ENCODE measurements at regions of chr19 and their contacts with region 1.

Region 1: GRCh38 chr19:572140-572742 is at the start of gene BSG:
- DNase-seq: peak; percentile 96 to 99 (median 99)
- ATAC-seq: peak; percentile 89
- H3K4me3 ChIP-seq: peak within 1 kb of the TSS; percentile 75
- H3K4me3 Mint-ChIP-seq: peak within 1 kb of the TSS; percentile 87 to 99 (median 96)
- H3K27ac ChIP-seq: peak within 1 kb of the TSS; percentile 93
- H3K27ac Mint-ChIP-seq: peak within 1 kb of the TSS; percentile 92 to 99 (median 96)
- H3K4me1 ChIP-seq: peaks cover 16 to 19% of the 10 kb centered on the region in 2 donors
- H3K4me1 Mint-ChIP-seq: peaks cover 12 to 49% (median 36%) of the 10 kb centered on the region in 7 donors
- H3K27me3 ChIP-seq: no peaks in the 10 kb centered on the region
- H3K27me3 Mint-ChIP-seq: peaks cover 0 to 4% (median 0%) of the 10 kb centered on the region in 5 donors
- total RNA-seq, gene BSG: 109 to 247 (median 120) TPM

Region 2: DNA sequence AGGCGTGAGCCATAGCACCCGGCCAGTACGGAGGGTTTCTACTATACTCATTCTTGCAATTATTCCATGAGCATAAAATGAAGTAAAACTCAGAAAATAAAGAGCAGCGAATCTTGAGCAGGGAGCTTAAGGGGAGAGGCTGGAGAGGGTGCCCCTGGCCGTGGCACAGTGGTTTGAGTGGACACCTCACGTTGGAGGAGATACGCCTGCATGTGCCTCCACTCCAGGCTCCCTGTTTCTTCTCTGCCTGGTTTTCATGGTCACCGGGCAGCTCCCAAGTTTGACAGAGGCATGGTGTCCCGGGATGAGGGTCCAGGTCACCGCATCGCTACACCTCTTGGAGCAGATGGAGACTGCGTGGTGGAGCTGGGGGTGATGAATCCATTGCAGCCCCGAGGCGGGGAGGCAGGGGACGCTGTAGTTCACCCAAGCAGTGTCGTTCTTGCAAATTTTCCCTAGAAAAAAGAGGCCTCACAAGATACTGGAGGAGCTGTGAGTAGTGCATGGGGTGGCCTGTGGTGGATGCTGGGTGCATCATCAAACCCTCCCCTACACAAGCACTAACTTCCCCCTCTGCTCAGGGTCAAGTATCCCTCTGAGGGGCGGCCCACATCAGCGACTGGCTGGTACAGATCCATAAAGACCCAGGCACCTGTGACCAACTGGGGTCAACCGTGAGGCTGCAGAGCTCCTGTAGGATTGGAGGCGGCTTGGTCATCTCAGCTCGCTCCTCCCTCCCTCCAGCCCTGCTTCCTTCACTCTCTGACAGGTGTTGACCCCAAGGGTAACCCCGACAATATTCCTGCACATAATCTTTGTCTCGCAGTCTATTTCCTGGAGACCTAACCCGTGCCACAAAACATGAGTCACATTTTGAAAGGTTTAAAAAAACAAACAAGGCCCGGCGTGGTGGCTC is 224.0 kb before region 1 on chr19:
- CTCF ChIA-PET with region 1: no interaction called
- POLR2A ChIA-PET with region 1: no interaction called
- intact Hi-C with region 1: no loop called
- DNase-seq: no peak
- ATAC-seq: no peak
- H3K4me3 ChIP-seq: no peak overlapping the region
- H3K4me3 Mint-ChIP-seq: no peak overlapping the region
- H3K27ac ChIP-seq: no peak overlapping the region
- H3K27ac Mint-ChIP-seq: no peak overlapping the region
- H3K4me1 ChIP-seq: peaks cover 5 to 17% of the 10 kb centered on the region in 2 donors
- H3K4me1 Mint-ChIP-seq: peaks cover 12 to 19% (median 16%) of the 10 kb centered on the region in 7 donors
- H3K27me3 ChIP-seq: no peaks in the 10 kb centered on the region
- H3K27me3 Mint-ChIP-seq: peaks cover 0 to 7% (median 5%) of the 10 kb centered on the region in 5 donors

Region 3: GRCh38 chr19:531009-531752 is 41.1 kb before region 1 on chr19:
- CTCF ChIA-PET with region 1: no interaction called
- POLR2A ChIA-PET with region 1: interaction called, 7 read pairs
- intact Hi-C with region 1: loop called (anchors 1 kb)
- DNase-seq: peak; percentile 79 to 100 (median 94)
- ATAC-seq: peak; percentile 87
- H3K4me3 ChIP-seq: peak overlapping the region; percentile 72
- H3K4me3 Mint-ChIP-seq: peak overlapping the region; percentile 64 to 93 (median 82)
- H3K27ac ChIP-seq: peak overlapping the region; percentile 90
- H3K27ac Mint-ChIP-seq: peak overlapping the region in 8 of 9 donors; percentile 19 to 87 (median 80)
- H3K4me1 ChIP-seq: peaks cover 8 to 9% of the 10 kb centered on the region in 2 donors
- H3K4me1 Mint-ChIP-seq: peaks cover 8 to 32% (median 16%) of the 10 kb centered on the region in 7 donors
- H3K27me3 ChIP-seq: no peaks in the 10 kb centered on the region
- H3K27me3 Mint-ChIP-seq: peaks cover 0 to 4% (median 0%) of the 10 kb centered on the region in 5 donors

Region 4: DNA sequence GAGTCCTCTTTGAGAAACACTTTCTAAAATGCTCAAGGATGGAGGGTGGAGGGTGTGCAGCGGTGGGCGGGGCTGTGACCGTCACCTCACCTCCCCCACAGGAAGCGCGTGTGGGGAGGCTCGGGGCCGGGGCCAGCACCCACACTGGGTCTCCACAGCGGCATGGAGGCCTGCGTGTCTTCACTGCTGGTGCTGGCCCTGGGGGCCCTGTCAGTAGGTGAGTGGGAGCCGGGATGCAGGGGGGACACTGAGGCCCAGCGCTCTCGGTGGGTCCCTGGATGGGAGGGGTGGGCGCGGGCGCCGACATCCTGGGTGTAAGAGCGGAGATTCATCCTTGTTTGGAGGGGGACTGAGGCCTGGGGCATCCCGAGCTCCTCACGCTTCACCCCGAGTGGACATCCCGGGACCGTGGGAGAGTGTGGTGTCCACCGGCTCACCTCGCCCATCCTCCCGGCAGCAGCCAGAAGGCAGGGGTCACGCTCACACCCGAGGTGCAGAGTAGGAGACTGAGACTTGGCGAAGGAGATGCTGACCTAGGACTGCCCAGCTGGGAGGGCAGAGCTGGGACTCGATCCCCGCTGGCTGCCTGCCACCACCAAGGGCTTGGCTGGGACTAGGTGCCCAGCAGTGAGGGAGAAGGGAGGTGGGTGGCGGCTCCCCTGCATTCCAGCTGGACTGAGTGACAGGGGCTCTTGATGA is 28.2 kb before region 1 on chr19 and contains the start of gene GZMM:
- CTCF ChIA-PET with region 1: no interaction called
- POLR2A ChIA-PET with region 1: interaction called, 5 read pairs
- intact Hi-C with region 1: loop called in 1 of 2 experiments (anchors 1 kb)
- DNase-seq: peak; percentile 63 to 86 (median 82)
- ATAC-seq: peak; percentile 98
- H3K4me3 ChIP-seq: peak within 1 kb of the TSS; percentile 70
- H3K4me3 Mint-ChIP-seq: peak within 1 kb of the TSS; percentile 81 to 94 (median 90)
- H3K27ac ChIP-seq: peak within 1 kb of the TSS; percentile 88
- H3K27ac Mint-ChIP-seq: peak within 1 kb of the TSS; percentile 77 to 97 (median 91)
- H3K4me1 ChIP-seq: peaks cover 5 to 10% of the 10 kb centered on the region in 2 donors
- H3K4me1 Mint-ChIP-seq: peaks cover 4 to 24% (median 21%) of the 10 kb centered on the region in 7 donors
- H3K27me3 ChIP-seq: no peaks in the 10 kb centered on the region
- H3K27me3 Mint-ChIP-seq: no peaks in the 10 kb centered on the region
- total RNA-seq, gene GZMM: 30.0 to 81.4 (median 67.8) TPM

Region 5: DNA sequence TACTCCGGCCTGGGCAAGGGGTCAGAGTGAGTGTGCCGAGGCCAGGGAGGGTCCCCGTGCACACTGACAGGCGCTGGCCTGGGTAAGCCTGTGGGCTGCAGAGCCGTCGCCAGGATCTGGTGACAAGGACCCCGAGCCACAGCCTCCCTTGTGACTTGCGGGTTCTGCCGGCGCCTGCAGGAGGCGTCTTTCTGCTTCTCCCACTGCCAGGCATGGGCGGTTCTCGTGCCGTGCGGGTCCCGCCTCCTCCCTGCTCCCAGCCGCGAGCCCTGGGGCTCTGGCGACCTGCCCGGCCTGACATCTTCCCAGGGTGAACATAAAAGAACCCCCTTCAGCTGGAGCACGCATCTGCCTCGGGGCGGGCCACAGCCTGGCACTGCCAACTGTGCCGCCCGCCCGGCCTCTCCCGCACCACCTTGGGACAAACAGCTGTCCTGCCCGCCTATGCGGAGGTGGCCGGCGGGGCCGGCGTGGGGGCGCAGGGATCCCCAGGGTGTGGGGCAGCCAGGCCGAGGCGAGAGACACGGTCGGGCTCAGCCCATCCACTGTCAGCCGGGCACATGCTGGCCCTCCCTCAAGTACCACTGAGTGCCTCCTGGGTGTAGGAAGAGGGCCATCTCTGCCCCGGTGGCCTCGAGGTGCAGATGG is 16.0 kb after region 1 on chr19:
- CTCF ChIA-PET with region 1: interaction called, 3 read pairs
- POLR2A ChIA-PET with region 1: interaction called, 4 read pairs
- intact Hi-C with region 1: loop called in 1 of 2 experiments (anchors 2 kb)
- DNase-seq: peak; percentile 35 to 72 (median 57)
- ATAC-seq: peak; percentile 66
- H3K4me3 ChIP-seq: no peak overlapping the region
- H3K4me3 Mint-ChIP-seq: peak overlapping the region in 8 of 10 donors; percentile 28 to 76 (median 48)
- H3K27ac ChIP-seq: no peak overlapping the region
- H3K27ac Mint-ChIP-seq: no peak overlapping the region
- H3K4me1 ChIP-seq: peaks cover 10 to 12% of the 10 kb centered on the region in 2 donors
- H3K4me1 Mint-ChIP-seq: peaks cover 0 to 11% (median 4%) of the 10 kb centered on the region in 7 donors
- H3K27me3 ChIP-seq: peaks cover 0 to 10% of the 10 kb centered on the region in 2 donors
- H3K27me3 Mint-ChIP-seq: peaks cover 0 to 31% (median 8%) of the 10 kb centered on the region in 5 donors

Region 6: GRCh38 chr19:610801-611505 is 38.7 kb after region 1 on chr19:
- CTCF ChIA-PET with region 1: interaction called, 5 read pairs
- POLR2A ChIA-PET with region 1: no interaction called
- intact Hi-C with region 1: loop called (anchors 1 to 5 kb)
- DNase-seq: peak in 8 of 9 donors; percentile 55 to 75 (median 62)
- ATAC-seq: peak; percentile 72
- H3K4me3 ChIP-seq: peak overlapping the region; percentile 49
- H3K4me3 Mint-ChIP-seq: peak overlapping the region; percentile 83 to 97 (median 94)
- H3K27ac ChIP-seq: peak overlapping the region; percentile 75
- H3K27ac Mint-ChIP-seq: peak overlapping the region; percentile 81 to 98 (median 90)
- H3K4me1 ChIP-seq: peaks cover 12% of the 10 kb centered on the region in 2 donors
- H3K4me1 Mint-ChIP-seq: peaks cover 0 to 23% (median 17%) of the 10 kb centered on the region in 7 donors
- H3K27me3 ChIP-seq: no peaks in the 10 kb centered on the region
- H3K27me3 Mint-ChIP-seq: no peaks in the 10 kb centered on the region

Region 7: GRCh38 chr19:633068-633785 is 61.0 kb after region 1 on chr19 and contains the start of gene POLRMT:
- CTCF ChIA-PET with region 1: no interaction called
- POLR2A ChIA-PET with region 1: interaction called, 3 read pairs
- intact Hi-C with region 1: loop called (anchors 1 kb)
- DNase-seq: peak; percentile 87 to 99 (median 96)
- ATAC-seq: peak; percentile 99
- H3K4me3 ChIP-seq: peak within 1 kb of the TSS; percentile 91
- H3K4me3 Mint-ChIP-seq: peak within 1 kb of the TSS; percentile 92 to 99 (median 97)
- H3K27ac ChIP-seq: peak within 1 kb of the TSS; percentile 78
- H3K27ac Mint-ChIP-seq: peak within 1 kb of the TSS; percentile 89 to 97 (median 93)
- H3K4me1 ChIP-seq: peaks cover 6 to 13% of the 10 kb centered on the region in 2 donors
- H3K4me1 Mint-ChIP-seq: peaks cover 13 to 41% (median 24%) of the 10 kb centered on the region in 7 donors
- H3K27me3 ChIP-seq: no peaks in the 10 kb centered on the region
- H3K27me3 Mint-ChIP-seq: no peaks in the 10 kb centered on the region
- total RNA-seq, gene POLRMT: 61.2 to 105 (median 71.3) TPM

Region 8: DNA sequence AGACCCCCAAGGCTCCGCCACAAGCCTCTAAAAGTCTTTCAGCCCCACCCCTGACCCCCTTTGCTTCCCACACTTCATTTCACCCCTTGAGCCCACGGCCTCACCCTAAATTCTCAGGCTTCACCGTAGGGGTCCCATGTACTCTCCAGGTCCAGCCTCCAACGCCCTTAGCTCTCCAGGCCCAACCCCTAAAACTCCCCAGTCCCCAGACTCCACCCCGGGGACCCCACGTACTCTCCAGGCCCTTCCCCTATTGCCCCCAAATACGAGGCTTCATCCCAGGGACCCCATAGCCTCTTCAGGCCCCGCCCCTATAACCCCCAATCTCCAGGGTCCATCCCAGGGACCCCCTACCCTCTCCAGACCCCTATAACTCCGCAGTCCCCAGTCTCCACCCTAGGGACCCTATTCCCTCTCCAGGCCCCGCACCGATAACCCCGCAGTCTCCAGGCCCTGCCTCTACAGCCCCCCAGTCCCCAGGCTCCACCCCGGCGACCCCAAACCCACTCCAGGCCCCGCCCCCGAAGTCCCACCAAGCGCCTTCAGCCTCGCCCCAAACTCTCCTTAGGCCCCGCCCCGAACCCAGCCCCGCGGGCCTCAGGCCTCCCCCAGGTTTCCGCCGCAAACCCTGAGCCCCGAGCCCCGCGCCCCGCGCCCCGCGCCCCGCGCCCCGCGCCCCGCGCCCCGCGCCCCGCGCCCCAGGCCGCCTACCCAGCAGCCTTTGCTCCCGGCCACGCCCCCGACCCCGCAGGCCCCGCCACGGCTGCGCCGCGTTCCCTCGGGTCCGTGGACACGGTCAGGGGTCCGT is 320.2 kb after region 1 on chr19:
- CTCF ChIA-PET with region 1: no interaction called
- POLR2A ChIA-PET with region 1: interaction called, 3 read pairs
- intact Hi-C with region 1: loop called in 1 of 2 experiments (anchors 2 kb)
- DNase-seq: no peak
- ATAC-seq: peak; percentile 65
- H3K4me3 ChIP-seq: peak overlapping the region; percentile 72
- H3K4me3 Mint-ChIP-seq: peak overlapping the region; percentile 77 to 96 (median 92)
- H3K27ac ChIP-seq: peak overlapping the region; percentile 97
- H3K27ac Mint-ChIP-seq: peak overlapping the region; percentile 65 to 100 (median 99)
- H3K4me1 ChIP-seq: peaks cover 3 to 5% of the 10 kb centered on the region in 2 donors
- H3K4me1 Mint-ChIP-seq: peaks cover 4 to 42% (median 30%) of the 10 kb centered on the region in 7 donors
- H3K27me3 ChIP-seq: no peaks in the 10 kb centered on the region
- H3K27me3 Mint-ChIP-seq: peaks cover 0 to 4% (median 0%) of the 10 kb centered on the region in 5 donors